Sigmoid colon (tissue), 7 donors: ENCODE measurements at regions of chr5 and their contacts with region 1.

Region 1: GRCh38 chr5:67537439-67538148 is 341.0 kb upstream of the CD180 start:
- DNase-seq: no peak
- H3K4me3 ChIP-seq: peak overlapping the region in 3 of 4 donors; percentile 20 to 31 (median 27)
- H3K27ac ChIP-seq: peak overlapping the region; percentile 73 to 85 (median 84)
- H3K4me1 ChIP-seq: peaks cover 0 to 32% (median 29%) of the 10 kb centered on the region in 4 donors
- H3K27me3 ChIP-seq: no peaks in the 10 kb centered on the region
- CTCF ChIP-seq: no peak
- EP300 ChIP-seq: no peak
- POLR2A ChIP-seq: no peak

Region 2: DNA sequence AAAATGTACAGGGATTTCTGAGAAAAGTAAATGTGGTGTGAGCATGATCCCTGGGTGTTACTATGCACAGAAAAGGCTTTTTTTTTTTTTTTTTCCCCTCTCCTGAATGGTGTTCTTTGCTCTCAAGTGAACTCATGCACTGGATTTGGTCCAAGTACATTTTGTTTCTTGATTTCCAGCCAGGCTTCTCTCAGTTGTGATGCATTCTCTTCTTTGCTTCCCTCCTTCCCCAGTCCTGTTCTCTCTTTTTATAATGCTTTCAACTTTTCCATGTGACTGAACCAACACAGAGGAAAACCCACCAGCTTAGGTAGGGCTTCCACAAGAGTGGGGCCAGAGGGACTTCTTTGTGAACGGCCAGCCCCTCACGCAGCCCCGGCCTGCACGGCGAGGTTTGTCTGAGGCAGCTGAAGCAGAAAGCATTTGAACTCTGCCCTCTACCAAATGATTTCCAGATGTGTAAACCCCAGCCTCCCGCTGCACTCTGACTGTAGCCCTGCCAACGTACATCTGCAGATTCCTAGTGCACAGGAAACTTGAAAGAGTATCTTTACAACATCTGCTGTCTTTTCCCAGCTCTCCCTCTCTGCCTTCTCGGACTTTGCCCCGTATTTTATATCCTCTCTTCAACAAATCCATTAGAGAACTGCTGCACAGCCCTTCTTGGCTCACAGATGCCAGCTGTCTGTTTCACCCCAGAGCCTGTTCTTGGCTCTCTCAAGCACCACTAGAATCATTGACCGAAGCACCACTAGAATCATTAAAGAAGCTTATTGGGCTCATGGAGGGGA is 269.2 kb before region 1 on chr5:
- intact Hi-C with region 1: loop called (anchors 10 kb)
- DNase-seq: peak; percentile 95
- H3K4me3 ChIP-seq: peak overlapping the region in 2 of 4 donors; percentile 13 to 14
- H3K27ac ChIP-seq: peak overlapping the region; percentile 91 to 94 (median 92)
- H3K4me1 ChIP-seq: peaks cover 0 to 89% (median 80%) of the 10 kb centered on the region in 4 donors
- H3K27me3 ChIP-seq: no peaks in the 10 kb centered on the region
- CTCF ChIP-seq: no peak
- EP300 ChIP-seq: peak; percentile 94 to 99 (median 96)
- POLR2A ChIP-seq: no peak

Region 3: GRCh38 chr5:67465537-67466207 is 71.9 kb before region 1 on chr5:
- intact Hi-C with region 1: no loop called
- DNase-seq: no peak
- H3K4me3 ChIP-seq: no peak overlapping the region
- H3K27ac ChIP-seq: no peak overlapping the region
- H3K4me1 ChIP-seq: peaks cover 0 to 11% (median 4%) of the 10 kb centered on the region in 4 donors
- H3K27me3 ChIP-seq: no peaks in the 10 kb centered on the region
- CTCF ChIP-seq: no peak
- EP300 ChIP-seq: no peak
- POLR2A ChIP-seq: no peak

Region 4: DNA sequence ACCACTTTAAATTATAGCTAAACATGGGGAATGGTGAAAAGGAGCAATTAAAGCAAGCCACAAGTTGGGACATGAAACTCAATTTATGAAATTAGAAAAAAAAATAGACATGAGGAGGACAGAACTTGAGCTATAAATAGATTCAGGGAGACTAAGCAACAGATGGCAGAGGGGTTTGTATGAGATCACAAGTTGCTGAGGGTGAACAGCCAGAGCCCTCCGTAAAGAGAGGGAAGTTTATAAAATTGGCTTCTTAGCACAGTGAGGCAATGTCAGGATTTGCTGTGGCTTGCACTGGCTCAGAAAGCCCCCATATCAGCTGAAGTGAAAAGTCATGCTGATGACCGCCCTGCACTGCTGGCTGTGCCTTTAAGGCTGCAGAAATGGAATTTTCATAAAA is 102.4 kb after region 1 on chr5:
- intact Hi-C with region 1: loop called (anchors 5 kb)
- DNase-seq: no peak
- H3K4me3 ChIP-seq: no peak overlapping the region
- H3K27ac ChIP-seq: peak overlapping the region in 3 of 4 donors; percentile 17 to 46 (median 40)
- H3K4me1 ChIP-seq: peaks cover 0 to 26% (median 22%) of the 10 kb centered on the region in 4 donors
- H3K27me3 ChIP-seq: no peaks in the 10 kb centered on the region
- CTCF ChIP-seq: no peak
- EP300 ChIP-seq: no peak
- POLR2A ChIP-seq: no peak

Region 5: GRCh38 chr5:68252673-68253623 is 715.4 kb after region 1 on chr5:
- intact Hi-C with region 1: loop called (anchors 10 kb)
- DNase-seq: peak; percentile 82
- H3K4me3 ChIP-seq: peak overlapping the region in 3 of 4 donors; percentile 26 to 33 (median 26)
- H3K27ac ChIP-seq: peak overlapping the region; percentile 67 to 83 (median 80)
- H3K4me1 ChIP-seq: peaks cover 0 to 100% (median 99%) of the 10 kb centered on the region in 4 donors
- H3K27me3 ChIP-seq: no peaks in the 10 kb centered on the region
- CTCF ChIP-seq: peak in 3 of 4 experiments; percentile 64 to 73 (median 73)
- EP300 ChIP-seq: peak in 1 of 4 donors; percentile 4
- POLR2A ChIP-seq: no peak